ENCODE measurements at regions of chr1 and their contacts with region 1.

Region 1: GRCh38 chr1:66503841-66504470 is 30.0 kb upstream of the SGIP1 start:
- DNase-seq: peak; percentile 68
- ATAC-seq: peak; percentile 99
- H3K4me3 ChIP-seq: no peak overlapping the region
- H3K27ac ChIP-seq: no peak overlapping the region
- H3K4me1 ChIP-seq: no peaks in the 10 kb centered on the region; a peak in 1 of 4 replicates
- H3K27me3 ChIP-seq: no peaks in the 10 kb centered on the region
- CTCF ChIP-seq: peak; percentile 56 to 88 (median 74); a peak in 5 of 6 replicates
- POLR2A ChIP-seq: no peak
- RAD21 ChIP-seq: peak; percentile 85

Region 2: GRCh38 chr1:66253330-66253921 is 250.5 kb before region 1 on chr1:
- CTCF ChIA-PET with region 1: interaction called, 17 read pairs
- POLR2A ChIA-PET with region 1: interaction called, 3 read pairs
- RAD21 ChIA-PET with region 1: interaction called, 3 to 4 read pairs
- intact Hi-C with region 1: loop called (anchors 1 kb)
- DNase-seq: peak; percentile 65
- ATAC-seq: peak; percentile 88
- H3K4me3 ChIP-seq: no peak overlapping the region
- H3K27ac ChIP-seq: peak overlapping the region; percentile 12; the same call in 1 of the 2 replicates
- H3K4me1 ChIP-seq: peaks cover 17 to 62% of the 10 kb centered on the region in 2 experiments
- H3K27me3 ChIP-seq: no peaks in the 10 kb centered on the region
- CTCF ChIP-seq: peak; percentile 67 to 93 (median 87)
- POLR2A ChIP-seq: no peak
- RAD21 ChIP-seq: peak; percentile 99

Region 3: GRCh38 chr1:66436378-66437145 is 67.4 kb before region 1 on chr1:
- CTCF ChIA-PET with region 1: interaction called, 10 read pairs
- POLR2A ChIA-PET with region 1: no interaction called
- RAD21 ChIA-PET with region 1: no interaction called
- intact Hi-C with region 1: no loop called
- DNase-seq: peak; percentile 63
- ATAC-seq: peak; percentile 88
- H3K4me3 ChIP-seq: no peak overlapping the region
- H3K27ac ChIP-seq: peak overlapping the region; percentile 50
- H3K4me1 ChIP-seq: peaks cover 17 to 46% of the 10 kb centered on the region in 2 experiments
- H3K27me3 ChIP-seq: no peaks in the 10 kb centered on the region
- CTCF ChIP-seq: peak; percentile 51 to 68 (median 63); a peak in 5 of 6 replicates
- POLR2A ChIP-seq: no peak
- RAD21 ChIP-seq: peak; percentile 72

Region 4: DNA sequence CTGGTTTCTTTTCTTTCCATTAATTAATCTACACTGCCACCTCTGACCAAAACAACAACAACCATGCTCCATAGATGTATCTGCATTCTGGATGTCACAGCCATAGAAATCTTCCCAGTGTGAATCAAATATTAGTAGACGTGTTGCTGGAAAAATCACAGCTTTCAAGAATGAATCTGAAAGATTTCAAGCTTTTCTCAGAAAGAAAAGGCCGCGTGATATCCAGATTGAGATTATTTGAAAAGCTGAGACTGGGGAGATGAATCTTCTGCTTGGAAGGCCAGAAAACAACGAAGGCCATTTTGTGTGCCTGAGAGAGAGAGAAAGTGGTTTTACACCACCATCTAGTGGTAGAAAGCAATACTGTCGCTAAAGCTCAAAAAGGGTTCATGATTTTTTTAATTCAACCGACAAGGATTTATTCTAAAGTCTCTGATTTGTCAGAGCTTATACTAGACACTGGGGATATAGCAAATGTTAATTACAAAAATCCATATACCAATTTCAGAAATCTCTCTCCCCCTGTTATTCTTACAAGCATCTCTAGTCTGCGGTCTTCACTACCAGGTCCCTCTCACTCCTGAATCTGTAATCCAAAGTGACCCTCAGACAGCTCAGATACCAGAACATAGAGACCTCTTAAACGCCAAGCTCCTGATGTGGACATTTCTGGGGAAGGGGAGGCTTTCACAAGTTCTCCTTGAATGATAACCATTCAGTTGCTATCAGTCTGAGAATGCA is 57.5 kb before region 1 on chr1:
- CTCF ChIA-PET with region 1: interaction called, 29 read pairs
- POLR2A ChIA-PET with region 1: no interaction called
- RAD21 ChIA-PET with region 1: interaction called in 1 of 2 experiments, 6 read pairs
- intact Hi-C with region 1: loop called (anchors 2 kb)
- DNase-seq: peak; percentile 74
- ATAC-seq: peak; percentile 76
- H3K4me3 ChIP-seq: no peak overlapping the region
- H3K27ac ChIP-seq: no peak overlapping the region
- H3K4me1 ChIP-seq: peaks cover 3 to 18% of the 10 kb centered on the region in 2 experiments; a peak in 2 of 4 replicates
- H3K27me3 ChIP-seq: no peaks in the 10 kb centered on the region
- CTCF ChIP-seq: peak; percentile 61 to 94 (median 80)
- POLR2A ChIP-seq: no peak
- RAD21 ChIP-seq: peak; percentile 84

Region 5: DNA sequence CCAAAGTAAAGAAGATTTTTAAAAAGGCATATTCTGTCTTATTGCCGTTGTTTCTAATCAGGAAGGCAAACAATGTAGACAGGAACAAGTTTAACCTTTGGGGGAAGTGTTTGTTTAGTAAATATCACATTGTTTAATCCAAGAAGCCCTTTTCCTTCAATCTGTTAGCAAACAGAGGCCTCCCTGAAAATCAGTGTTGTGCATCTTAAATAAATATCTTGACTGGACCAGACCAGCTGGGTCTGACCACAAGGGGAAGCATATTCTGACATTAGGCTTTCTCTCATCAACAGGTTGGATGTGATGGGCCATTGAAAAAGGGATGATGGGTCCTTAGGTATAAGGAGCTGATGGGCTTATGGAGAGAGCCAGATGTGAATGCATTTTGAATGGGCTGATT is 51.8 kb before region 1 on chr1:
- CTCF ChIA-PET with region 1: interaction called, 15 read pairs
- POLR2A ChIA-PET with region 1: no interaction called
- RAD21 ChIA-PET with region 1: no interaction called
- intact Hi-C with region 1: loop called (anchors 2 kb)
- DNase-seq: no peak
- ATAC-seq: no peak; the same call in 1 of the 2 replicates
- H3K4me3 ChIP-seq: no peak overlapping the region
- H3K27ac ChIP-seq: no peak overlapping the region
- H3K4me1 ChIP-seq: no peaks in the 10 kb centered on the region
- H3K27me3 ChIP-seq: no peaks in the 10 kb centered on the region
- CTCF ChIP-seq: peak; percentile 5 to 15 (median 14); a peak in 2 of 6 replicates
- POLR2A ChIP-seq: no peak
- RAD21 ChIP-seq: peak; percentile 27; the same call in 1 of the 2 replicates

Region 6: GRCh38 chr1:66462313-66462712 is 41.6 kb before region 1 on chr1:
- CTCF ChIA-PET with region 1: no interaction called
- POLR2A ChIA-PET with region 1: no interaction called
- RAD21 ChIA-PET with region 1: no interaction called
- intact Hi-C with region 1: no loop called
- DNase-seq: no peak
- ATAC-seq: no peak
- H3K4me3 ChIP-seq: no peak overlapping the region
- H3K27ac ChIP-seq: no peak overlapping the region
- H3K4me1 ChIP-seq: no peaks in the 10 kb centered on the region
- H3K27me3 ChIP-seq: no peaks in the 10 kb centered on the region
- CTCF ChIP-seq: no peak
- POLR2A ChIP-seq: no peak
- RAD21 ChIP-seq: no peak

Region 7: GRCh38 chr1:66490816-66491215 is 13.1 kb before region 1 on chr1:
- CTCF ChIA-PET with region 1: interaction called, 14 read pairs
- POLR2A ChIA-PET with region 1: interaction called, 3 read pairs
- RAD21 ChIA-PET with region 1: no interaction called
- intact Hi-C with region 1: no loop called
- DNase-seq: no peak
- ATAC-seq: no peak
- H3K4me3 ChIP-seq: no peak overlapping the region
- H3K27ac ChIP-seq: no peak overlapping the region
- H3K4me1 ChIP-seq: no peaks in the 10 kb centered on the region
- H3K27me3 ChIP-seq: no peaks in the 10 kb centered on the region
- CTCF ChIP-seq: no peak
- POLR2A ChIP-seq: no peak
- RAD21 ChIP-seq: no peak

Region 8: GRCh38 chr1:66585002-66585401 is 81.0 kb after region 1 on chr1:
- CTCF ChIA-PET with region 1: no interaction called
- POLR2A ChIA-PET with region 1: no interaction called
- RAD21 ChIA-PET with region 1: no interaction called
- intact Hi-C with region 1: no loop called
- DNase-seq: no peak
- ATAC-seq: no peak
- H3K4me3 ChIP-seq: no peak overlapping the region
- H3K27ac ChIP-seq: no peak overlapping the region
- H3K4me1 ChIP-seq: no peaks in the 10 kb centered on the region
- H3K27me3 ChIP-seq: no peaks in the 10 kb centered on the region
- CTCF ChIP-seq: no peak
- POLR2A ChIP-seq: no peak
- RAD21 ChIP-seq: no peak

Region 9: DNA sequence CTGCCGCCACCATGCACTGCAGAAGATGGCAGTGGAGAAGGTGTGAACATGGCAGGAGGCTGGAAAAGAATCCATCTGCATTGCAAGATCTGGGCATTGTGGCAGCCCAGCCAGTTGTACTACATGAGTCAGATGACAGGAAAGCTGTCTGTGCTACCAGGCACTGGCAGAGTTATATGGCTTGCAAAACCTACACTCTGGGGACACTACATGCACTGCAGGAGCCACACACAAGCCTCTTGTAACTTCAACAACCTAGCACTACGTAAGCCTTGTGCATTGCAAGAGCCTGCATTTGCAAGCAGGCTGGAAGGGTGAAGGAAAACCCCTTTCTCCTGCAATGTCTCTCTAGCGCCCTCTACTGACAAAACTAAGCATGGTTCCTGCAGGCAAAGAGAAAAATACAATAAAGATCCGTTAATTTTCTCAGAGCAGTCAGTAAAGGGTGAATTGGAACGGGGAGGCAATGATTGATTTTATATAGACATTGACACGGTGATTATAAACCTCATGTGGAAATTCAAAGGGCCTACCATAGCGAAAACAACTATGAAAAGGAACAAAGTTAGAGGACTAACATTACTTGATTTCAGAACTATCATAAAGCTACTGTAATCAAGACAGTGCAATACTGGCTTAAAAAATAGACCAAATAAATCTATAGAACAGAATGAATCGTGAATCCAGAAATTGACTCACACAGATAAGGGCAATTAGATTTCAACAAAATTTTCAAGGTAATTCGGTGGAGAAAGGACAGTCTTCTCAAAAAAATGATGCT is 222.1 kb after region 1 on chr1:
- CTCF ChIA-PET with region 1: interaction called, 13 read pairs
- POLR2A ChIA-PET with region 1: no interaction called
- RAD21 ChIA-PET with region 1: no interaction called
- intact Hi-C with region 1: loop called (anchors 5 kb)
- DNase-seq: peak; percentile 45
- ATAC-seq: peak; percentile 94
- H3K4me3 ChIP-seq: no peak overlapping the region
- H3K27ac ChIP-seq: no peak overlapping the region
- H3K4me1 ChIP-seq: peaks cover 0 to 6% of the 10 kb centered on the region in 2 experiments; a peak in 1 of 4 replicates
- H3K27me3 ChIP-seq: no peaks in the 10 kb centered on the region
- CTCF ChIP-seq: peak; percentile 71 to 99 (median 96)
- POLR2A ChIP-seq: no peak
- RAD21 ChIP-seq: peak; percentile 86

Region 10: GRCh38 chr1:67134695-67135094 is 630.7 kb after region 1 on chr1 and contains the start of gene C1orf141:
- CTCF ChIA-PET with region 1: no interaction called
- POLR2A ChIA-PET with region 1: no interaction called
- RAD21 ChIA-PET with region 1: no interaction called
- intact Hi-C with region 1: no loop called
- DNase-seq: no peak
- ATAC-seq: no peak
- H3K4me3 ChIP-seq: no peak within 1 kb of the TSS
- H3K27ac ChIP-seq: no peak within 1 kb of the TSS
- H3K4me1 ChIP-seq: no peaks in the 10 kb centered on the region
- H3K27me3 ChIP-seq: no peaks in the 10 kb centered on the region
- CTCF ChIP-seq: no peak
- POLR2A ChIP-seq: no peak
- RAD21 ChIP-seq: no peak
- total RNA-seq, gene C1orf141: not detected